AG04450 (cell line): ENCODE measurements at regions of chr5 and their contacts with region 1.

Region 1: GRCh38 chr5:115831163-115831768 is 10.1 kb downstream of the ATG12 start:
- DNase-seq: no peak
- H3K4me3 ChIP-seq: no peak overlapping the region
- H3K27ac ChIP-seq: no peak overlapping the region
- H3K27me3 ChIP-seq: no peaks in the 10 kb centered on the region
- CTCF ChIP-seq: peak; percentile 83

Region 2: GRCh38 chr5:114101153-114101552 is 1730.1 kb before region 1 on chr5:
- CTCF ChIA-PET with region 1: interaction called, 10 read pairs
- POLR2A ChIA-PET with region 1: no interaction called
- DNase-seq: peak; percentile 20
- H3K4me3 ChIP-seq: no peak overlapping the region
- H3K27ac ChIP-seq: no peak overlapping the region
- H3K27me3 ChIP-seq: no peaks in the 10 kb centered on the region
- CTCF ChIP-seq: peak; percentile 72

Region 3: DNA sequence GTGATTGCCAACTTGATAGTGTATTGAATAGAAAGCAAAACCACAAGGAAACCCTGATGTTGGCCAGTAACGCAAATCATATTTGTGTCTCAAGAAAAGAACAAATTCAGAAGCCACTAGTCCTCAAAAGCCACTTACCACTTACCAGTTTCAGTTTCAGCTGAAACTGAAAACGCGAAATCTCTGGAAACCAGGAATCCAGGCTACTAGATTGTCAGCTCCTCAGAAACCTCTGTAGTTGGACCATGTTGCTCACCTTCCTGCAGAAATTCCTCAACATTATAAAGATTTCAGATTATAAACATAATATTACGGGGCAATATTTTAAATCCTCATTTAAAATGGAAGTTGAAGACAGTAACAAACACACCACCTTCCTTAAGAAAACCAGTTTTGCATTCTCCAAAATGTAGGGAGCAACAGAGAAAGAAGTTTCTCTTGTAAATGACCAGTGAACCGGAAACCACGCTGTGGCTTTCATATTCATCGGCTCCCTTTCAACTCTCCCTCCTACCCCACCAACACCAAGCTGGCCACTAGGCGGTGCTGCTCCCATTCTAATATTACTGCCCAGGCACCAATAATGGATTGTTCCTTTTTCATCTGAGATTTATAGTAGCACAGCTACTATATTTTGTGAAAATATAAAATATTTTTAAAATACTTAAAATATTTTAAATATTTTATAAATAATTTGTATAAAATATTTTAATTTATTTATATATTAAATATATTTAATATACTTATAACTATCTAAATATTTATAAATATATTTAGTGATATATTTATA is 196.7 kb before region 1 on chr5:
- CTCF ChIA-PET with region 1: interaction called, 39 read pairs
- POLR2A ChIA-PET with region 1: no interaction called
- DNase-seq: peak; percentile 51
- H3K4me3 ChIP-seq: peak overlapping the region; percentile 46
- H3K27ac ChIP-seq: no peak overlapping the region
- H3K27me3 ChIP-seq: peaks cover 4% of the 10 kb centered on the region
- CTCF ChIP-seq: peak; percentile 99

Region 4: DNA sequence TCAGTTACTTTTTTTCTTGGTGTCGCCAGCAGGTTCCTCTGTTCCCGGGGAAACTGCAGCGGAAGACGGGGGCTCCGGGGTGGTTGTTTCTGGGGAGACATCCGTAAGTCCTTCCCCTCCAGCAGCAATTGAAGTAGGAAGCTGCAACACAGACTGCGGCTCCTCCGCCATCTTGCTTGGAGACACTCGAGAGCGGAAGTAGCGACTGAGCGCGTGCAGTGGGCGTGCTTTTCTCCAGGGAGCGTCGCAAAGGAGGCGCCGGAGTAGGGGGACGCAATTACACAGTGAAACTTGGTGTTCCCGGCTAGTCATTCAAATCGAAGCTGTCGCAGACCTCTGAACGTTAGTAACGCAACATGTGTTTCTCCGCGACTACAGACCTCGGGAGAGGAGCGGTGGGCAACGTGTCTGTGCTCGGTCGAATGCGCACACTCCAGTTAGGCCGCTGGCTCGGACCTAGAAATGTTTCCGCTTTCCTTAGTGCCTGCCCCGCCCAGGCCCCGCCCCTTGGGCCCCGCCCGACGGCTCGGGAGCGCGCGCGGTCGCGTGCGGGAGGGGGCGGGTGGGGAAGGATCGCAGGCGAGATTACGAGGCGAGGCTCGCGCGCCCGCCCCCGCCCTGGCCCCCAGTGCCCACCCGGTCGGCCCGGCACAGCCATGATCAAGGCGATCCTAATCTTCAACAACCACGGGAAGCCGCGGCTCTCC is 10.3 kb after region 1 on chr5 and contains the starts of genes AP3S1 and ATG12:
- CTCF ChIA-PET with region 1: interaction called, 12 read pairs
- POLR2A ChIA-PET with region 1: no interaction called
- DNase-seq: peak; percentile 66
- H3K4me3 ChIP-seq: peak within 1 kb of the TSS; percentile 91
- H3K27ac ChIP-seq: peak within 1 kb of the TSS; percentile 89
- H3K27me3 ChIP-seq: no peaks in the 10 kb centered on the region
- CTCF ChIP-seq: no peak
- polyA plus RNA-seq, gene AP3S1: 109 and 171 TPM in 2 replicates
- polyA plus RNA-seq, gene ATG12: 112 and 154 TPM in 2 replicates